Activated CD4-positive, alpha-beta T cell treated with anti-CD3 and anti-CD28 coated beads for 36 hours (primary cell): ENCODE measurements at regions of chr6 and their contacts with region 1.

Region 1: DNA sequence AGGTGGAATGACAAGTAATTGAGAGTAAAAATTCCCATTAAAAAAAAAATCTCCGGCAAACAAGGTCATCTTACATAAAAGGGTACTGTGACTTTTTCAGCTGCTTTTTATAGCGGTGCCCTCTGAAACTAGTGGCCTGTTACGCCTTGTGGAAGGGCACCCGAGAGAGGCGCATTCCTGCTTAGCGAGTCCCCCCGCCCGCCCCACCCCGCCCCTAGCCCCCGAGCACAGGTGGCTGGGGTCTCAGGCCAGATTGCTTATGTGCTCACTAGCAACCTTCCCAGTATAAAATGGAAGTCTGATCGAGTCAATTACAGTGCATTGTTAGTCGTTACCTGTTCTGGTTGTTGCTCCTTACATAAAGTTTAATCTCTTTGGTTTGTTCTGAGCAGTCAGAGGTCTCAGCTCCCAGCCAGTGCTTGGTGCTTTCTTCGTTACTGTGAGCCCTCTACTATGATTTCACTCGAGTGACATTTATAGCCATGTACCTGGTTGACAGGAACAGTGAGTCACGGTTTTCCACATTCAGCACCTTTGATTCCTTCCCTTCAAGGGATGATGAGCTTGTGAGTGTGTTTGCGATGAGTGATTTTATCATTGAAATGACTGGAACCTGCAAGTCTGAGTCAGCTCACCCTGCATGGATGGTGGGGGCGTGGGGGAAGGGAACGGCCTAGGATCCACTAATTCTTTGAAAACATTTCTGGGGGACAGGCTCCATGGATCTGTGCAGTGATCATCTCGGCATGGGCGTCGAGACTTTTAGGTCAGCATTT is 47.6 kb downstream of the ZDHHC14 start:
- DNase-seq: peak; percentile 88
- ATAC-seq: peak; percentile 89
- H3K4me3 Mint-ChIP-seq: peak overlapping the region; percentile 51
- H3K27ac Mint-ChIP-seq: peak overlapping the region; percentile 91
- H3K4me1 Mint-ChIP-seq: peaks cover 46% of the 10 kb centered on the region
- H3K27me3 Mint-ChIP-seq: no peaks in the 10 kb centered on the region

Region 2: GRCh38 chr6:157368359-157369049 is 60.1 kb before region 1 on chr6:
- CTCF ChIA-PET with region 1: interaction called, 3 read pairs
- POLR2A ChIA-PET with region 1: no interaction called
- intact Hi-C with region 1: loop called in 1 of 2 experiments (anchors 2 kb)
- DNase-seq: peak; percentile 24
- ATAC-seq: peak; percentile 72
- H3K4me3 Mint-ChIP-seq: no peak overlapping the region
- H3K27ac Mint-ChIP-seq: no peak overlapping the region
- H3K4me1 Mint-ChIP-seq: peaks cover 19% of the 10 kb centered on the region
- H3K27me3 Mint-ChIP-seq: peaks cover 29% of the 10 kb centered on the region

Region 3: DNA sequence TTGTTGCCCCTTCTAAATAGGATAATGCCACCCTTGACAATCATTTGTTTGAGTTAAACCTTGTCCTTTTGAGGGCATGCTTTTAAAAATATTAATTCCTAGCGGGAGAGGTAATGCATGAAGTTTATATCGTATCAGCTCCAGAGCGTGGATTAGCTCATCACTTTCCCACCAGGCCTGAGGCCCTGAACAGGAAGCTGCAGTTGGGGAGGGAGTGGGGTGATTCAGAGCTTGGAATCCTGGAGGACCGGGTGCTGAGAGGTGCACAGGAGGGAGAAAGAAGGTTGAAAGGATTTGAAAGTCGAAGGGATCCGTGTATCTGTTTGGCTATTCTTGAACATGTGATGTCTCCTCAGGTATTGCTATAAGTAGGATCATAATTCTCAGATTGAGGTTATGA is 22.6 kb before region 1 on chr6:
- CTCF ChIA-PET with region 1: no interaction called
- POLR2A ChIA-PET with region 1: no interaction called
- intact Hi-C with region 1: no loop called
- DNase-seq: no peak
- ATAC-seq: no peak
- H3K4me3 Mint-ChIP-seq: no peak overlapping the region
- H3K27ac Mint-ChIP-seq: no peak overlapping the region
- H3K4me1 Mint-ChIP-seq: no peaks in the 10 kb centered on the region
- H3K27me3 Mint-ChIP-seq: no peaks in the 10 kb centered on the region

Region 4: GRCh38 chr6:157461000-157461915 is 32.6 kb after region 1 on chr6:
- CTCF ChIA-PET with region 1: interaction called, 5 read pairs
- POLR2A ChIA-PET with region 1: interaction called, 8 read pairs
- intact Hi-C with region 1: loop called (anchors 1 kb)
- DNase-seq: peak; percentile 90
- ATAC-seq: peak; percentile 77
- H3K4me3 Mint-ChIP-seq: no peak overlapping the region
- H3K27ac Mint-ChIP-seq: peak overlapping the region; percentile 89
- H3K4me1 Mint-ChIP-seq: peaks cover 56% of the 10 kb centered on the region
- H3K27me3 Mint-ChIP-seq: no peaks in the 10 kb centered on the region

Region 5: DNA sequence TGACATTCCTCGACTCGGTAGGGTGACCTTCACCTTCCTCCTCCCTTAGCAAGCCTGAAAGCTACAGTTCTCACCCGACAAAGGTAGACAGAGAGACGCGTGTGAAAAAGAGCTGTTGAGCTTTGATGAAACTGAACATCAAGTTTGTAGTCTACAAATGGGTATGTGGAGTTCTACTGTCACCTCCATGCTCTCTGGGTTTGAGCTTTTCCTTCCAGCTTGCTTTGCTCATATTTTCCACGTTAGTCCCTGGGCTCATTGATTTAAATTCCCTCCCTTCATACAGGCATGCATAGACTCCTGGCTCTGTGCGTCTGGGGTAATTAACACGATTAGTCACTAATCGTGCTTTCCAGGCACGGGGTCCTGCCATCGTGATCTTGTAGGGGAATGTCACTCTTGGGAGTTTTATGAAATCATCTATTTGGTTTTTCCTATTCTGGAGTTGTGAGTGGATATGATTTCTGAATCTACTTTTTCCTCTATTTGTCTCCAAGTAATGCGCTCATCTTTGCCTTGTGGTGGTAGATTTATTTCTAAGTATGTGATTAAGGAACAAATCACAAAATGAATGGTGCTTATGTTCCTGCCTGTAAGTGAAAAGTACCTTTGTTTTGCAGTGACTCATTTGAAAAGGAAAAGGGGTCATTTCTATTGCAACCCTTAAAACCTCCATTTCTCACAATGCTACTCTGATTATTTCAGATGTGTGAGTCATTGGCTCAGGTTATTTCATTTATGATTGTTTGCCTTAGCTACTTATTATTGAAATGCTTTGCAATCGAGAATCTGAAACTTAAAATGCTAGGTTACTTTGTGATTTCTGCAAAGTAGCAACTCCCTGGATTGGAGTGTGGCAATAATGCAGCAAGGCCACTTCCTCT is 107.0 kb after region 1 on chr6:
- CTCF ChIA-PET with region 1: interaction called, 3 read pairs
- POLR2A ChIA-PET with region 1: interaction called, 4 read pairs
- intact Hi-C with region 1: loop called (anchors 1 kb)
- DNase-seq: peak; percentile 49
- ATAC-seq: peak; percentile 88
- H3K4me3 Mint-ChIP-seq: peak overlapping the region; percentile 47
- H3K27ac Mint-ChIP-seq: peak overlapping the region; percentile 88
- H3K4me1 Mint-ChIP-seq: peaks cover 35% of the 10 kb centered on the region
- H3K27me3 Mint-ChIP-seq: peaks cover 9% of the 10 kb centered on the region

Region 6: GRCh38 chr6:158168040-158168289 is 739.4 kb after region 1 on chr6 and contains the start of gene SERAC1:
- CTCF ChIA-PET with region 1: no interaction called
- POLR2A ChIA-PET with region 1: no interaction called
- intact Hi-C with region 1: loop called in 1 of 2 experiments (anchors 2 kb)
- DNase-seq: no peak
- ATAC-seq: peak; percentile 30
- H3K4me3 Mint-ChIP-seq: peak within 1 kb of the TSS; percentile 89
- H3K27ac Mint-ChIP-seq: peak within 1 kb of the TSS; percentile 95
- H3K4me1 Mint-ChIP-seq: peaks cover 21% of the 10 kb centered on the region
- H3K27me3 Mint-ChIP-seq: no peaks in the 10 kb centered on the region
- total RNA-seq, gene SERAC1: 3.9 to 5.7 TPM